ENCODE measurements at regions of chr17 and their contacts with region 1.

Region 1: GRCh38 chr17:32915245-32915644 is 12.7 kb upstream of the TMEM98 start:
- DNase-seq: peak; percentile 7
- H3K4me3 Mint-ChIP-seq: peak overlapping the region; percentile 30
- H3K27ac Mint-ChIP-seq: peak overlapping the region; percentile 93
- H3K4me1 Mint-ChIP-seq: peaks cover 58% of the 10 kb centered on the region
- H3K27me3 Mint-ChIP-seq: no peaks in the 10 kb centered on the region

Region 2: DNA sequence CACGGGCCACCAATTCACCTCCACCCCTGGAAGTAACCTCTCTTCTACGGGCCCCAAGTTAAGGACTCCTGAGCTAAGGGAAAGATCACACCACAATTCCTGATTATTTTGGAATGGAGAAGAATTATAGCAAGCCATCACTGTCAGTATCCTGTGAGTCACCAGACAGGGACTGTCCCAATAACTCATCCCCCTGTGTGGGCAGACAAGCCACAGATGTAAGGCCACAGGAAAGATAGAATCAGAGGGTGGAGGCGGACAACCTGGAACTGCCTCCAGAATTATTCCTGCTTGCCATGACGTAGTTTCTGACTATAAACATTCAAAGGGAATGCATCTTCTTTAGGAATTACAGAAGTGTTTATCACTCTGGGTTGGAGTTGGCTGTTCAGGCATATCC is 32.5 kb before region 1 on chr17:
- intact Hi-C with region 1: loop called (anchors 1 kb)
- DNase-seq: no peak
- H3K4me3 Mint-ChIP-seq: no peak overlapping the region
- H3K27ac Mint-ChIP-seq: peak overlapping the region; percentile 61
- H3K4me1 Mint-ChIP-seq: peaks cover 34% of the 10 kb centered on the region
- H3K27me3 Mint-ChIP-seq: peaks cover 25% of the 10 kb centered on the region

Region 3: DNA sequence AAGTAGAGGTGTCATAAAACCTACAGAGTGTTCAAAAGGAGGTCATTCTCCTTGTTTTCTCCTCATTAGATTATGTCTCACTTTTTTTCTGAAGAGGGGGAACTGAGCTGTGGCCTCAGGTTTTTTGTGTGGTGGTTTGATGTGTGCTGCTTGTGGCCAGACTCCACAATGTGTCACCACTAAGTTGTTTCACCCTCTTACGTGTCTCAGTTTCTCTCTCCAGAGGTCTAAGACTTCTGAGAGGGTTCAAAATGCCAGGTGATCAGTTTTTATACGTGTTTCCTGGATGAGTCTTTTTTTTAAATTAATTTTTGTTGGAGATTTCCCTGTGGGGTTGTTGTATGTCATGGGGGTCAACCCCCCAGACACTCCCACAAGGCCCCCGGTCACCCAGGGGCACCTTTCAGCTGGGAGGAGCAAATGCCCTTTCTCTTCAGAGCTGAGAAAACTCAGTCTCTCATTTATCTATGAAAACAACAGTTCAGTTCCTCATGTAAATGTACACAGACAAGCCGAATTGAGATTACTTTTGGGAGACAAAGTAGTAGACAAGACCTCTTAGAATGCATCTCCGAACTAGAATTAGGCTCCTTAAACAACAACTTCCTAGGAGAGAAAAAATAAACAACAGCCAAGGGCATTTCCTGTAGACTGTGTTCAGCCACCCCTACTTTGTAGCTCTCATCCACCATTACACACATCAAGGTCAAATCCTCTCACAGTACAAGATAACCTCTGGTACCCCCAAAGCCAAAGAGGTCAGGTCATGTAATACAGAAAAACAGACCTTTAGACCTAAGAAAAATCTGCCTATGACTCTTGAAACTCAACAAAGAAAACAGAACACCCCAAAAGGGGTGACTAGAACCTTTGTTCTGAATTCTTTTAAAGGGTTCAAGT is 11.2 kb before region 1 on chr17:
- intact Hi-C with region 1: loop called (anchors 1 kb)
- DNase-seq: no peak
- H3K4me3 Mint-ChIP-seq: no peak overlapping the region
- H3K27ac Mint-ChIP-seq: peak overlapping the region; percentile 79
- H3K4me1 Mint-ChIP-seq: peaks cover 28% of the 10 kb centered on the region
- H3K27me3 Mint-ChIP-seq: peaks cover 2% of the 10 kb centered on the region

Region 4: GRCh38 chr17:32927724-32928585 is 12.7 kb after region 1 on chr17 and contains the start of gene TMEM98:
- intact Hi-C with region 1: loop called (anchors 2 kb)
- DNase-seq: no peak
- H3K4me3 Mint-ChIP-seq: peak within 1 kb of the TSS; percentile 72
- H3K27ac Mint-ChIP-seq: no peak within 1 kb of the TSS
- H3K4me1 Mint-ChIP-seq: peaks cover 2% of the 10 kb centered on the region
- H3K27me3 Mint-ChIP-seq: peaks cover 26% of the 10 kb centered on the region
- total RNA-seq, gene TMEM98: 18.8 and 19.3 TPM in 2 replicates

Region 5: DNA sequence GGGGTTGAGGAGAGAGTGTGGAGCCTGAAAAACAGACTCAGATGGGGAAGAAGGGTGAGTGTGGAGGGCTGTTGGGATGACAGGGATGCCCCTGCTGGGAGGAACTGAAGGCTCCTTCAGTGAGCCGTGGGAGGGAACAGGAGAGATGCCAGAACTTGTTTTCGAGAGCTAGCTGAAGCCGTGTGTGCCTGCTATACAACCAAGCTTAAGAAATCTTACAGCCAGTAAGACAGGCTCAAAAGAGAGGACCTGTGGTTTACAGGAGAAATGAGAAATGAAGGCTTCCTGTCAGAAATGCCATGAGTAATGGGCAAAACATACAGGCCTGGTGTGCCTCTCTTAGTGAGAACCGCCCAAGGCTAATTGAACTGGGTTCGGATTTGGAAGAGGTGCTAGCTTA is 176.0 kb after region 1 on chr17:
- intact Hi-C with region 1: no loop called
- DNase-seq: no peak
- H3K4me3 Mint-ChIP-seq: no peak overlapping the region
- H3K27ac Mint-ChIP-seq: no peak overlapping the region
- H3K4me1 Mint-ChIP-seq: no peaks in the 10 kb centered on the region
- H3K27me3 Mint-ChIP-seq: peaks cover 8% of the 10 kb centered on the region

Region 6: GRCh38 chr17:33142705-33143299 is 227.6 kb after region 1 on chr17:
- intact Hi-C with region 1: no loop called
- DNase-seq: no peak
- H3K4me3 Mint-ChIP-seq: no peak overlapping the region
- H3K27ac Mint-ChIP-seq: no peak overlapping the region
- H3K4me1 Mint-ChIP-seq: no peaks in the 10 kb centered on the region
- H3K27me3 Mint-ChIP-seq: no peaks in the 10 kb centered on the region